Posterior cingulate gyrus (tissue), 11 donors: ENCODE measurements at regions of chr6 and their contacts with region 1.

Region 1: DNA sequence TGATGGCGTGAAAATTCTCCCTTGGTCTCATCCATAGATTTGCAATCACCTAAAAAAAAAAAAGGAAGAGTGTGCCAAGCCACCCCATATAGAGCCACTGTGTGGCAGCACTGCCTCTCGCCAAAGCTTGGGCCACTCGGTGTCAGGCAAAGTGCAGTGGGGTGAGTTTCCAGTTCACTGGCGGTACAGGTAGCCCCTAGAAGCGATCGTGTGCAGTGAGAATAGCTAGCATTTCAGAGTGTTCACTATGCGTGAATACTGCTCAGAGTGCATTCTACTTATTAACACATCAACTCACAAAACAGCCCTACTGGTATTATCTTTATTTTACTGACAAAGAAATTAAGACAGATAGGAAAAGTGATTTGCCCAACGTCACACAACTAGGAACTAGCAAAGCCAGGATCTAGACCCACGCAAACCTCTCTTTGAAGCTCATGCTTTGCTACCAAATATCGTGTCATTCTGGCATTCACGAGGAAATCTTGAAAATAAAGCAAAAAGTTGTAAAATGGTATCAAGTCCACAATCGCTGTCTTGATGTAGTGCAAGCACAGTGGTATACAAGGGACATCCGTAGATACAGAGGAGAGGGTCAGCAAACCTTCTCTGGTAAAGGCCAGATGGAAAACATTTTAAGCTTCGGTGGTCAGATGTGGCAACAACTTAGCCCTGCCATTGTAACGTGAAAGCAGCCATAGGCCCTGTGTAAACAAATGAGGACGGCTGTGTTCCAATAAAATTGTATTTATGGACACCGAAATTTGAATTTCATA is 10.4 kb upstream of the GCNT2 start:
- DNase-seq: peak in 8 of 10 donors; percentile 45 to 90 (median 56)

Region 2: DNA sequence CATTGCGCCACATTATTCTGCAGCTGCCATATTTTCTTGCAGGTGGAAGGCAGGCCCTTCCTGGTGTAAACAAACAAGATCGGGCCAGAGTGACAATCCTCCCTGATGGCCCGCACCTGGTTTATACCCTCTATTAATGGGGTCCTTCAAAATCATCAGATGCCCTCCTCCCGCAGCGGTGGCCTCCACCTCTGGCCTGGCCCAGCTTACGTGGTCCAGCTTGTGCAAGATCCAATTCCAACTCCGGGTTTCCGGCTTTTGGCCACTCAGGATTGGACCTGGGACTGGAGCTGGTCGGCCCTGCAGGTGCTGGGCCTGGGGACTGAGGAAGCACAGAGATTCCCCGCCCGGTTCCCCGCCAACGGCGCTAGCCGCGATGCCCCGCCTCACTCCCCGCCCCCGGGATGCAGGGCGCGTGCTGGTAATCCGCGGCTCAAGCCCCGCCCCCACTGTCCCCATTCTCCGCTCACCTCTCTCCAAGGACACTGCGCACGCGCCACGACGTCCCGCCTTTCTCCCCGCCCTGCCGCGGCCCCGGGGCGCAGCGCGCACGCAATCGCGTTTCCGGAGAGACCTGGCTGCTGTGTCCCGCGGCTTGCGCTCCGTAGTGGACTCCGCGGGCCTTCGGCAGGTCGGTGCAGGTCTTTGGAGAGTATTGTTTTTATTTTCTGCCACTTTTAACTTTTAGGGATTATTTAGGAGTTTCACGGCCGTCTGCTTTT is 236.6 kb after region 1 on chr6 and contains the start of gene TMEM14B:
- intact Hi-C with region 1: loop called (anchors 10 kb)
- DNase-seq: peak; percentile 98 to 100 (median 100)

Region 3: DNA sequence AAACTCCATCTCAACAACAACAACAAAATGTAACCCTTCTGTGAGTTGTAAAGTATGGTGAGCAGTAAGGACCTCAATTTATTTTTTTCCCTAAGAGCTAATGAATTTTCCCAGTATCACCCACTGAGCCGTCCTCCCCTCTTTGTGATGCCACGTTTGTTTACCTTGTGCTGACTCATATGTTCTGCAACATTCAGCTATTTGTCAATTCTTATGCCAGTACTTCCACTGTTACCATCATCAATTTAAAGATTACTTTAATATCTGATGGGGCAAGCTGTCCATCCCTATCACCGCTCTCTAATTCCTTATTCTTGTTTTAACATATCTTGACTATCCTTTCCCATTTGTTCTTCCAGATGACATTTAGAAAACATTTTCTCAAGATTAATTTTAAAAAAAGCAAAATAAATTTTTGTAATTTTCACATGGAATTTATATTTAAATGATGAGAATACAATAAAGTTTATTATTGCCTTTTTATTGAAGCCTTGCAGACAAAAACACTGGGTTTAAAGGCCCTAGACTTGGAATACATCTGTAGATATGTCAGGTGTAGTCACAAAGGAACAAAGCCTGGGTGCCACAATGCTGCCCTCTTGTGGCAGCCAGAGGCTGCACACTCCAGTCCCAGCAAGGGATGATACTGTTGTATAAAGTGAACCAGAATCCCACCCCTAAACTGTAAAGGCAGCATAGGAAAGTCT is 290.2 kb after region 1 on chr6:
- intact Hi-C with region 1: loop called (anchors 1 kb)
- DNase-seq: peak; percentile 22 to 95 (median 60)